ENCODE measurements at regions of chr1 and their contacts with region 1.

Region 1: DNA sequence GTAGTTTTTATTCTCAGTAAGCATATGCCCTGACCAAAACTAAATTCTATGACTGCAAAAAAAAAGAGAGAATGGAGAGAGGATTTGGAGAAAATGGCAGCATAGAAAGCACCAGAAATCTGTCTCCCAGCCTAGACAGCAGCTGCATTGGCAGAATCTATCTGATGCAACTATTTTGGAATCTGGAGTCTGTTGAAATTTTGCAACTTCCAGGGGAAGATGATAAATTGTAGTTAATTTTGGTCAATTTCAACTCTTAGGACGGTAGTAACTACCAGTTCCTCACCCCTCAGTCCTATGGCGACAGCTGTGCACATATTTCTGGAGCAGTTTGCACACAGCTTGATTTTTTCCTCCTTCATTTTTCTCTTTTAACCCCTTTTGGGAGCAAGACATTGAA is 10.9 kb downstream of the EXO5 start:
- DNase-seq: no peak
- H3K4me3 ChIP-seq: no peak overlapping the region
- H3K4me3 Mint-ChIP-seq: no peak overlapping the region
- H3K27ac ChIP-seq: no peak overlapping the region
- H3K27ac Mint-ChIP-seq: no peak overlapping the region
- H3K4me1 ChIP-seq: no peaks in the 10 kb centered on the region
- H3K4me1 Mint-ChIP-seq: peaks cover 10% of the 10 kb centered on the region
- H3K27me3 ChIP-seq: no peaks in the 10 kb centered on the region
- H3K27me3 Mint-ChIP-seq: peaks cover 0 to 1% (median 0%) of the 10 kb centered on the region in 3 donors
- CTCF ChIP-seq: no peak

Region 2: DNA sequence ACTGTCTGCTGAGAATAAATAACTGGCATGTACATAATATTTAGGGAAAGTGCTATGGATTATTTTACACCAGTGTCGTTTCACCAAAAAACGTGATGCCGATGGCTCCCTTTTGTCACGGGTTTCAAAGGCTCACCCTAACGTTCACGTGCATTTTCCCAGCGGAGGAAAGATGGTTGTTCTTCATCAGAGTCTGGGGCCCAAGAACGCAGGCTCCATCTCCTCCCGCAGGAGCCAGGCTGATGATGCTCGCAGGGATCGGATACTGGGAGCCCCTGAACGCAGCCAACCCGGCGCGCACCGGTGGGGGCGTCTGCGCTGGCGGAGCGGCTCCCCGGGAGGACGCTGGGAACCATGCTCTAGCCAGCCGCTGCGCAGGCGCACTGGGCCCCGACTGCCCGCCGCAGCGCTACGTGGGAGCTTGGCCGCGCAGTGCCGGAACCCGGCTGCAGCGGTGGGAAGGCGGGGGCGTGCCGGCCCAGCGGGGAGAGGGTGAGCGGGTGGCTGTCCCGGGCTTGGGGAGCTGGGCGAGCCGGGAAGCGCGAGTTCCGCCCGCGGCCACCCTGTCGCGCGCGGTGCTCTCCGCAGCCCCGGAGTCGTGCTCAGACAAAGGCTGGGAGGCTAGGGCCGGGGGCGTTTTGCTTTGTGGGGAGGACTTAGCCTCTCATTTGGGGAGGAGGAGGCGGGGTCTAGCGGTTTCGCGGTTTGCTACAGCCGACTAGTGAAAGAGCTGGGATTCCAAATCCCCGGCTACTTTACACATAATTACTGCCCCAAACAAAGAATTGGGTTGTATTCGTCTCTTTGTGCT is 69.6 kb before region 1 on chr1 and contains the start of gene ZFP69B:
- intact Hi-C with region 1: loop called in 1 of 2 experiments (anchors 10 kb)
- DNase-seq: peak; percentile 73 to 82 (median 80)
- H3K4me3 ChIP-seq: peak within 1 kb of the TSS; percentile 59 to 84 (median 64)
- H3K4me3 Mint-ChIP-seq: peak within 1 kb of the TSS; percentile 88 to 92
- H3K27ac ChIP-seq: peak within 1 kb of the TSS; percentile 25 to 53
- H3K27ac Mint-ChIP-seq: peak within 1 kb of the TSS in 6 of 7 donors; percentile 3 to 73 (median 44)
- H3K4me1 ChIP-seq: peaks cover 15 to 20% of the 10 kb centered on the region in 2 donors
- H3K4me1 Mint-ChIP-seq: peaks cover 20% of the 10 kb centered on the region
- H3K27me3 ChIP-seq: no peaks in the 10 kb centered on the region
- H3K27me3 Mint-ChIP-seq: peaks cover 0 to 1% (median 0%) of the 10 kb centered on the region in 3 donors
- CTCF ChIP-seq: no peak
- polyA plus RNA-seq, gene ZFP69B: 0.20 to 0.67 TPM in 2 of 3 donors, not detected in the other

Region 3: DNA sequence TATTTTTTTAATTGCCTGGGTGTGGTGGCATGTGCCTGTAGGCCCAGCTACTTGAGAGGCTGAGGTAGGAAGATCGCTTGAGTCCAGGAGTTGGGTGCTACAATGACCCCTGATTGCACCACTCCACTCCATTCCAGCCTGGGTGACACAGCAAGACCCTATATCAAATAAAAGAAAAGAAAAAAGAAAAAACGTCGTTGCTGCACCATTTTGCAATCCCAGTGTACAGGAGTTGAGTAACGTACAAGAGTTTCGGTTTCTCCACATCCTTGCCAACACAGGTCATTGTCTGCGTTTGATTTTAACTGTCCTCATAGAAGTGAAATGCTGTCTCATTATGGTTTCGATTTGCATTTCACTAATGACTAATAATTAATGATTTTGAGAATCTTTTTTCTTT is 19.8 kb after region 1 on chr1:
- intact Hi-C with region 1: no loop called
- DNase-seq: peak; percentile 57 to 81 (median 78)
- H3K4me3 ChIP-seq: peak overlapping the region in 2 of 3 experiments; percentile 40 to 63
- H3K4me3 Mint-ChIP-seq: peak overlapping the region; percentile 67 to 83
- H3K27ac ChIP-seq: peak overlapping the region; percentile 81 to 86
- H3K27ac Mint-ChIP-seq: peak overlapping the region; percentile 86 to 94 (median 93)
- H3K4me1 ChIP-seq: peaks cover 13 to 14% of the 10 kb centered on the region in 2 donors
- H3K4me1 Mint-ChIP-seq: peaks cover 15% of the 10 kb centered on the region
- H3K27me3 ChIP-seq: no peaks in the 10 kb centered on the region
- H3K27me3 Mint-ChIP-seq: peaks cover 0 to 1% (median 0%) of the 10 kb centered on the region in 3 donors
- CTCF ChIP-seq: no peak

Region 4: GRCh38 chr1:40630488-40631381 is 111.2 kb after region 1 on chr1:
- intact Hi-C with region 1: no loop called
- DNase-seq: no peak
- H3K4me3 ChIP-seq: no peak overlapping the region
- H3K4me3 Mint-ChIP-seq: no peak overlapping the region
- H3K27ac ChIP-seq: no peak overlapping the region
- H3K27ac Mint-ChIP-seq: no peak overlapping the region
- H3K4me1 ChIP-seq: peaks cover 5 to 17% of the 10 kb centered on the region in 2 donors
- H3K4me1 Mint-ChIP-seq: peaks cover 13% of the 10 kb centered on the region
- H3K27me3 ChIP-seq: no peaks in the 10 kb centered on the region
- H3K27me3 Mint-ChIP-seq: peaks cover 0 to 1% (median 0%) of the 10 kb centered on the region in 3 donors
- CTCF ChIP-seq: peak; percentile 28

Region 5: GRCh38 chr1:41023279-41023990 is 503.9 kb after region 1 on chr1:
- intact Hi-C with region 1: no loop called
- DNase-seq: no peak
- H3K4me3 ChIP-seq: no peak overlapping the region
- H3K4me3 Mint-ChIP-seq: no peak overlapping the region
- H3K27ac ChIP-seq: no peak overlapping the region
- H3K27ac Mint-ChIP-seq: peak overlapping the region in 2 of 7 donors; percentile 15 to 65
- H3K4me1 ChIP-seq: no peaks in the 10 kb centered on the region
- H3K4me1 Mint-ChIP-seq: no peaks in the 10 kb centered on the region
- H3K27me3 ChIP-seq: no peaks in the 10 kb centered on the region
- H3K27me3 Mint-ChIP-seq: no peaks in the 10 kb centered on the region
- CTCF ChIP-seq: no peak

Measured in CD14-positive monocyte (primary cell).